ENCODE measurements at regions of chr10 and their contacts with region 1.

Region 1: DNA sequence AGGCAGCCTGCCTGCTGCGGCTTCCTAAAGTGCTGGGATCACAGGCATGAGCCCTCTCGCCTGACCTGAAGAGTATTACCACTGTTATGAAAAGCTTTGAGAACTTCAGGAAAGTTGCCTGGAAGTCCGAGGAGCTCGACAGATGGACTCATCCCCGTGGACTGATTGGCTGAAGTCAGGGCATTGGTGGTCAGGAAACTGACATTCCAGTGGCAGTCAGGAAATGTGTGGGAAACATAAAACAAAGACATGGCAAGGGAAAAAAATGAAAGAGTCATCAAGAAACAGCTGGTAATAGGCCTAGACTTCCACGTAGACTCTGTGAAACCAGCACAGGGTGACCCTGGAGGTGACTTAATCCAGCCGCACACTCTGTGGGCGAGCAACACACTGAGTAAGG is 123.3 kb downstream of the CDH23 start:
- DNase-seq: no peak
- ATAC-seq: no peak
- H3K4me3 ChIP-seq: no peak overlapping the region
- H3K27ac ChIP-seq: no peak overlapping the region
- H3K4me1 ChIP-seq: no peaks in the 10 kb centered on the region
- H3K27me3 ChIP-seq: no peaks in the 10 kb centered on the region
- CTCF ChIP-seq: no peak
- POLR2A ChIP-seq: no peak

Region 2: DNA sequence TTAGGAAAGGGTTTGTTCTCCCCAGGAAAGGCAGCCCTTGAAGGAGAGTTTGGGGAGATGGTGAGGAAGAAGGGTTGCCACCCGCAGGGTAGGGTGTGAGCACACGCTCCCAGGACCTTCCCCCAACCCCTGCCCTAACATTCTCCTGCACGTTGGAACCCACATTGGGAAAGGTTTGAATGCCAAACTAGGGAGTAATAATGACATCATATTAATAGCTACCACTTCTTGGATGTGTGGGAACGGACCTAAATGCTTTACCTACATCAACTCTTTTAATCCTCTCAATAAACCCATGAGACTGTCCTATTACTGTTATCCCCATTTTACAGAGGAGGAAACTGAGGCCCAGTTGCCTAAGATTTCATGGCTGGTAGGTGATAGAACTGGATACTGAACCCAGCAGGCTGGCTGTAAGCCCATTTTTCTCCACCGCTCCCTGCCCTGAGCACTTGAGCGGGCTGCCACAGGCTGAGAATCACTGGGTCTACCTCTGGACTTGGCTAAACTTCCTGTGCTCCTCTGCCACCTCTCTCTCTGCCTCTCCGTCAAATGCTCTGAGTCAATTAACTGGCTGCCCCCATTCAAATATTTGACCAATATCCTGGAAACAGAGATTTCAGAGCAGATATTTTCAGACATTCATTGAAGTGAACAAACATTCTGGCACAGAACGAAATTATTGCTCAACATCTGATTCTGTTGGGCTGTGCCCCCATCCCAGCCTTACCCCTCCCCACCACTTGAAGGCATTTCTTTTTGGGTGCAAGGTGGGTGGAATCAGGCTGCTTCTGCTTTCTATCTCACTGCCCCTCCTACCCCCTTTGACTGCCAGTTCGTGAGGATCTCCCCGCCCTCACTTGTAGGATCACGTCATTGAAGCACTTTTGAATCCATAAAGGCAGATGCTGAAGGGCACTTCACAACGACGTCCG is 69.8 kb after region 1 on chr10:
- intact Hi-C with region 1: loop called in 1 of 10 experiments (anchors 2 kb)
- DNase-seq: no peak
- ATAC-seq: no peak
- H3K4me3 ChIP-seq: no peak overlapping the region
- H3K27ac ChIP-seq: no peak overlapping the region
- H3K4me1 ChIP-seq: no peaks in the 10 kb centered on the region
- H3K27me3 ChIP-seq: peaks cover 0 to 9% (median 0%) of the 10 kb centered on the region in 9 donors
- CTCF ChIP-seq: no peak
- POLR2A ChIP-seq: no peak

Measured in heart left ventricle (tissue), 16 donors.